MCF 10A (cell line): ENCODE measurements at regions of chr1 and their contacts with region 1.

Region 1: GRCh38 chr1:165367375-165367993 is 11.0 kb upstream of the LMX1A start:
- DNase-seq: peak; percentile 89
- H3K4me3 Mint-ChIP-seq: no peak overlapping the region
- H3K27ac Mint-ChIP-seq: no peak overlapping the region
- H3K4me1 Mint-ChIP-seq: peaks cover 23% of the 10 kb centered on the region
- H3K27me3 Mint-ChIP-seq: peaks cover 38% of the 10 kb centered on the region
- CTCF ChIP-seq: peak; percentile 99

Region 2: GRCh38 chr1:165114022-165114888 is 253.2 kb before region 1 on chr1:
- CTCF ChIA-PET with region 1: interaction called, 100 read pairs
- POLR2A ChIA-PET with region 1: interaction called, 5 read pairs
- intact Hi-C with region 1: loop called (anchors 1 kb)
- DNase-seq: peak; percentile 85
- H3K4me3 Mint-ChIP-seq: no peak overlapping the region
- H3K27ac Mint-ChIP-seq: no peak overlapping the region
- H3K4me1 Mint-ChIP-seq: peaks cover 17% of the 10 kb centered on the region
- H3K27me3 Mint-ChIP-seq: peaks cover 16% of the 10 kb centered on the region
- CTCF ChIP-seq: peak; percentile 96

Region 3: DNA sequence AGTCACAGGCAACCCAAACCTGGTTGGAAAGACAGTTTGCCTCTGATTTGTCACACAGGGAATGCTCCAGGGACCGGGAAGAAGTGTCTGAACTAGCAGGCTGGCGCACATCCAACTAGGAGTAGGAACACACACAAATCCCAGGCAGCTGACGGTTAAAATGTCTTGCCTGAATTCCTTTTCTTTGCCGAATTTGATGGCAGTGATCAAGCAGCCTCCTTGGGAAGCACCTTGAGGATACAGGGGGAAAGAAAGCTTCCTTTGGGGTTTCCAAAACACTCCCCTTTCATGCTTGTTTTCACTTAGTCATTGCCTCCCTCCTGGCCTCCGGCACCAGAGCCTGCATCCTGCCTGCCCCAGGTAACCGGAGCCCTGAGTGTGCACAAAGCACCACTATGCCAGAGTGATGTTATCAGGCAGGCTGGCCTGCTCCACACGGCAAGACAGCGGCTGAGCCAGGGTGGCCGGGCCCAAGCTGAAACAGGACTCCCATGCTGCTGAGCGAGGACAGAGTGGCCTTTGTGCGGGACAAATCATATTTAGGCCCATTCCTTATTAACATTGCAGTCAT is 204.7 kb before region 1 on chr1:
- CTCF ChIA-PET with region 1: interaction called, 56 read pairs
- POLR2A ChIA-PET with region 1: no interaction called
- intact Hi-C with region 1: no loop called
- DNase-seq: peak; percentile 81
- H3K4me3 Mint-ChIP-seq: no peak overlapping the region
- H3K27ac Mint-ChIP-seq: no peak overlapping the region
- H3K4me1 Mint-ChIP-seq: no peaks in the 10 kb centered on the region
- H3K27me3 Mint-ChIP-seq: peaks cover 14% of the 10 kb centered on the region
- CTCF ChIP-seq: no peak

Region 4: GRCh38 chr1:165248969-165249571 is 118.4 kb before region 1 on chr1:
- CTCF ChIA-PET with region 1: interaction called, 154 read pairs
- POLR2A ChIA-PET with region 1: no interaction called
- intact Hi-C with region 1: no loop called
- DNase-seq: no peak
- H3K4me3 Mint-ChIP-seq: no peak overlapping the region
- H3K27ac Mint-ChIP-seq: no peak overlapping the region
- H3K4me1 Mint-ChIP-seq: no peaks in the 10 kb centered on the region
- H3K27me3 Mint-ChIP-seq: peaks cover 48% of the 10 kb centered on the region
- CTCF ChIP-seq: no peak

Region 5: DNA sequence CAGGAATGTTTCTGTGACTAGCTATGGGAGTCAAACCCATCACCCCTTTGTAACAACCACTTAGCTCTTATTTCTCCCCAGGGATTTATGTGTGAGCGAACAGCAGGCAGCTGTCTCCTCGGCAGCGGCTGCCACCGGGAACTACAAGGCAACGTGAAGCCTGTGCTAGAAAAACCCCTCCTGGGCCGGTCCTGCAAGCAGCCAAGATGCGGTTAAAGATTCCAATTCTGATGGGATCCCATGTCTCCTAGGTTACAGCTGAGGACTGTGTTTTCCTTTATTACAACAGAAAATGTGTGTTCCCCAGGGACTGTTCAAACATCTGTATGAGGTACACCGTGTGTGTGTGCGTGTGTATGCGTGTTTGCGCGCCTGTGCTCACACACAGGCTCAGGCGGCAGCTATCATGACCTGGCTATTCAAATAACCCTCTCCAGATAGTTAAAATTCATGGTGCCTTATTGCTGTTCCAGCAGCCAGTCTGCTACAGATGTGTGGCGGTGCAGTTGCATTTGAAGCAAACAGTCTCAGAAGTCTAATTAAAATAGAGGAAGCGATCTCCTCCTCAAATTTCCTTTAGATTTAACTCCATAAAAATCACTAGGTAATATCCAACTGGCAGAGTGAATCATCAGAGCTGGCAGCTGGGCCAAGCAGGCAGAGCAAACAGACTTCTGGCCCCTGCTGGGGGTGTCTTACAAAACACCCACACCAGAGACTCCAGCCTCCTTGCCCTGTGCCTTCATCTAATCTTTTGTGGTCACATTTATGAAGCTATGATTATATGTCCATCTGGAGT is 78.9 kb before region 1 on chr1:
- CTCF ChIA-PET with region 1: interaction called, 75 read pairs
- POLR2A ChIA-PET with region 1: no interaction called
- intact Hi-C with region 1: no loop called
- DNase-seq: peak; percentile 64
- H3K4me3 Mint-ChIP-seq: no peak overlapping the region
- H3K27ac Mint-ChIP-seq: no peak overlapping the region
- H3K4me1 Mint-ChIP-seq: no peaks in the 10 kb centered on the region
- H3K27me3 Mint-ChIP-seq: peaks cover 10% of the 10 kb centered on the region
- CTCF ChIP-seq: no peak

Region 6: GRCh38 chr1:165330483-165330882 is 37.0 kb before region 1 on chr1:
- CTCF ChIA-PET with region 1: interaction called, 47 read pairs
- POLR2A ChIA-PET with region 1: no interaction called
- intact Hi-C with region 1: no loop called
- DNase-seq: no peak
- H3K4me3 Mint-ChIP-seq: no peak overlapping the region
- H3K27ac Mint-ChIP-seq: no peak overlapping the region
- H3K4me1 Mint-ChIP-seq: no peaks in the 10 kb centered on the region
- H3K27me3 Mint-ChIP-seq: peaks cover 32% of the 10 kb centered on the region
- CTCF ChIP-seq: no peak

Region 7: DNA sequence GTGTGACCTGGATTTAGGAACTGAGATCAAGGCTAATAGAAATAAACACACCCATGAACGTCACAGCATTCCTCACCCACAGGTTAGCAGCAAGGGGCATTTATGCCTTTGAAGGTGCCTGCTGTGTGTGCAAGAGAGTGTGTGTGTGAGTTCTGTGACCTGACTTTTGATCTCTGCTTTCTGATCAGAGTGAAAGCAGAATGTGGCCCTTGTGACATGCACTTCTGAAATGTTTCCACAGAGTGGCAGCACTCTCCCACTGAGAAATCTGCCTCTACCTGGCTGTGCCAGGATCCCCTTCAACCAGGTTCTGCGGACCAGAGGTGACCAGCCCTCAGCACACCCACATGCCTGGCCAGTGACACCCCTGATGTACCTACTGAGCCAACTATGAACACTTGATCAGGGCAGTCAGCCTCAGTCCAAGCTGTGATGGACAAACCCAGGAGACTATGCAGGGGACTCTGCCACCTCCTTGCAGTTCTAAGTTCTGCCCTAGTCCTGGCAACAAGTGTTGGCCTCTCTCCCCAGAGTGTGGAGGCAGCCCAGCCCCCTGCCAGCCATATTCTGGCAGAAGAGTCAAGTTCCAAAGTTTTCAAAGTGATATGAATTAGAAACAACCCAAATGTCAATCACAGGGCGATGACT is 36.5 kb after region 1 on chr1:
- CTCF ChIA-PET with region 1: interaction called, 212 read pairs
- POLR2A ChIA-PET with region 1: no interaction called
- intact Hi-C with region 1: no loop called
- DNase-seq: peak; percentile 65
- H3K4me3 Mint-ChIP-seq: no peak overlapping the region
- H3K27ac Mint-ChIP-seq: no peak overlapping the region
- H3K4me1 Mint-ChIP-seq: no peaks in the 10 kb centered on the region
- H3K27me3 Mint-ChIP-seq: peaks cover 13% of the 10 kb centered on the region
- CTCF ChIP-seq: peak; percentile 91